HepG2 (cell line): ENCODE measurements at regions of chrX and their contacts with region 1.

Region 1: GRCh38 chrX:120250522-120251271 is at the start of gene ZBTB33:
- DNase-seq: peak; percentile 86
- ATAC-seq: peak; percentile 99
- H3K4me3 ChIP-seq: peak within 1 kb of the TSS; percentile 80 to 82 (median 80)
- H3K27ac ChIP-seq: peak within 1 kb of the TSS; percentile 86
- H3K4me1 ChIP-seq: peaks cover 18% of the 10 kb centered on the region
- H3K27me3 ChIP-seq: no peaks in the 10 kb centered on the region
- CTCF ChIP-seq: peak; percentile 90
- EP300 ChIP-seq: no peak
- POLR2A ChIP-seq: peak in 1 of 2 experiments; percentile 39; a peak in 1 of 4 replicates
- RAD21 ChIP-seq: peak; percentile 48
- total RNA-seq, gene ZBTB33: 20.2 and 36.2 TPM in 2 replicates

Region 2: GRCh38 chrX:119887721-119888425 is 362.8 kb before region 1 on chrX:
- CTCF ChIA-PET with region 1: no interaction called
- POLR2A ChIA-PET with region 1: no interaction called
- in situ Hi-C with region 1: no loop called
- intact Hi-C with region 1: loop called (anchors 5 kb)
- DNase-seq: peak; percentile 54
- ATAC-seq: peak; percentile 79
- H3K4me3 ChIP-seq: no peak overlapping the region
- H3K27ac ChIP-seq: no peak overlapping the region
- H3K4me1 ChIP-seq: no peaks in the 10 kb centered on the region
- H3K27me3 ChIP-seq: no peaks in the 10 kb centered on the region; a peak in 1 of 5 replicates
- CTCF ChIP-seq: peak; percentile 80
- EP300 ChIP-seq: no peak
- POLR2A ChIP-seq: no peak
- RAD21 ChIP-seq: 0 out of 2 replicates have a peak, but pooled peaks have one; percentile 18

Region 3: GRCh38 chrX:120287513-120288112 is 36.9 kb after region 1 on chrX:
- CTCF ChIA-PET with region 1: no interaction called
- POLR2A ChIA-PET with region 1: interaction called, 4 read pairs
- in situ Hi-C with region 1: no loop called
- intact Hi-C with region 1: loop called (anchors 5 kb)
- DNase-seq: peak; percentile 53
- ATAC-seq: peak; percentile 82
- H3K4me3 ChIP-seq: peak overlapping the region in 1 of 3 experiments; percentile 23; a peak in 2 of 6 replicates
- H3K27ac ChIP-seq: peak overlapping the region; percentile 94
- H3K4me1 ChIP-seq: peaks cover 35% of the 10 kb centered on the region
- H3K27me3 ChIP-seq: 0 out of 5 replicates have a peak, but pooled peaks cover 0 to 1% of the 10 kb centered on the region in 2 experiments
- CTCF ChIP-seq: no peak
- EP300 ChIP-seq: no peak; a peak in 1 of 4 replicates
- POLR2A ChIP-seq: no peak
- RAD21 ChIP-seq: no peak

Region 4: GRCh38 chrX:120299928-120300327 is 49.2 kb after region 1 on chrX:
- CTCF ChIA-PET with region 1: no interaction called
- POLR2A ChIA-PET with region 1: no interaction called
- in situ Hi-C with region 1: no loop called
- intact Hi-C with region 1: loop called (anchors 1 kb)
- DNase-seq: peak; percentile 49
- ATAC-seq: peak; percentile 90
- H3K4me3 ChIP-seq: peak overlapping the region in 2 of 3 experiments; percentile 30 to 43; a peak in 2 of 6 replicates
- H3K27ac ChIP-seq: no peak overlapping the region
- H3K4me1 ChIP-seq: peaks cover 18% of the 10 kb centered on the region
- H3K27me3 ChIP-seq: no peaks in the 10 kb centered on the region; a peak in 1 of 5 replicates
- CTCF ChIP-seq: peak; percentile 72
- EP300 ChIP-seq: no peak
- POLR2A ChIP-seq: no peak
- RAD21 ChIP-seq: peak; percentile 69; the same call in 1 of the 2 replicates